Caco-2 (cell line): ENCODE measurements at regions of chr22 and their contacts with region 1.

Region 1: DNA sequence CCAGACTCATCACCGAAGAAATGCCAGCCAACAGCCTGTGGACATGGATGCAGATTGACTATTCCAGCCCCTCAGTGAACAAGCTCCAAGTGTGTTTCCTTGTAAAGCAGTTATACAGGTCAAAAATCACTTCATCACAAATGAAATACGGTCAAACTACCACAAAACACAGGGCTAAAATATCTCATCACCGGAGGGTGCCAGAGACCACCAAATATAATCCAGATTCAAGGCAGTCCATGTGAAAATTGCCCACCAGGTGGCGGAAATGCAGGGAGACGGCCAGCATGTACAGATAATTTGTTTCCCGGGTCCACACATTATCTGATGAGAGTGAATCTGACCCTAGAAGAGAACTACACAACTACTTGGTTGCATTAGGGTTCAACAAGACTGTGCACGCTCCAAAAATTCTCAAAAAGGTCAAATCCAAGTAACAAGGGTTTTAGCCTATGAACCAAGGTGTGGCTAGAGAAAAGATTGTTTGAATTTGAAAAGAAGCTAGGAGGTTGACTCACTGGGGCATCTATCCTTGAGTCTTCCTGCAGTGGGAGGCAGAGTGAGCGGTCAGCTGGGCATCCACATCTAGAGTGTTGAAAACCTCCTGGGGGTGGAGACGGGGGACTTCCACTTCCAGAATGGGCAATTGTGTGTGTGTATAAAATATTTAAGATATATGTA is 71.7 kb downstream of the IGLL5 start:
- DNase-seq: peak; percentile 73 to 82
- H3K4me3 ChIP-seq: no peak overlapping the region
- H3K4me3 Mint-ChIP-seq: no peak overlapping the region
- H3K27ac Mint-ChIP-seq: no peak overlapping the region
- H3K4me1 ChIP-seq: no peaks in the 10 kb centered on the region
- H3K4me1 Mint-ChIP-seq: no peaks in the 10 kb centered on the region
- H3K27me3 ChIP-seq: no peaks in the 10 kb centered on the region; the same call in 1 of the 2 replicates
- H3K27me3 Mint-ChIP-seq: peaks cover 6% of the 10 kb centered on the region
- CTCF ChIP-seq: peak; percentile 86 to 93

Region 2: GRCh38 chr22:22848364-22848866 is 110.9 kb before region 1 on chr22:
- CTCF ChIA-PET with region 1: interaction called, 4 read pairs
- POLR2A ChIA-PET with region 1: no interaction called
- intact Hi-C with region 1: loop called (anchors 1 kb)
- DNase-seq: peak; percentile 74 to 81
- H3K4me3 ChIP-seq: no peak overlapping the region
- H3K4me3 Mint-ChIP-seq: no peak overlapping the region
- H3K27ac Mint-ChIP-seq: no peak overlapping the region
- H3K4me1 ChIP-seq: no peaks in the 10 kb centered on the region
- H3K4me1 Mint-ChIP-seq: no peaks in the 10 kb centered on the region
- H3K27me3 ChIP-seq: no peaks in the 10 kb centered on the region
- H3K27me3 Mint-ChIP-seq: peaks cover under 1% of the 10 kb centered on the region
- CTCF ChIP-seq: peak; percentile 85 to 92

Region 3: GRCh38 chr22:23128269-23129108 is 169.2 kb after region 1 on chr22:
- CTCF ChIA-PET with region 1: interaction called, 42 read pairs
- POLR2A ChIA-PET with region 1: no interaction called
- intact Hi-C with region 1: loop called (anchors 1 kb)
- DNase-seq: peak; percentile 67 to 86
- H3K4me3 ChIP-seq: no peak overlapping the region
- H3K4me3 Mint-ChIP-seq: no peak overlapping the region
- H3K27ac Mint-ChIP-seq: no peak overlapping the region
- H3K4me1 ChIP-seq: no peaks in the 10 kb centered on the region
- H3K4me1 Mint-ChIP-seq: no peaks in the 10 kb centered on the region
- H3K27me3 ChIP-seq: no peaks in the 10 kb centered on the region
- H3K27me3 Mint-ChIP-seq: no peaks in the 10 kb centered on the region
- CTCF ChIP-seq: peak; percentile 64 to 76

Region 4: DNA sequence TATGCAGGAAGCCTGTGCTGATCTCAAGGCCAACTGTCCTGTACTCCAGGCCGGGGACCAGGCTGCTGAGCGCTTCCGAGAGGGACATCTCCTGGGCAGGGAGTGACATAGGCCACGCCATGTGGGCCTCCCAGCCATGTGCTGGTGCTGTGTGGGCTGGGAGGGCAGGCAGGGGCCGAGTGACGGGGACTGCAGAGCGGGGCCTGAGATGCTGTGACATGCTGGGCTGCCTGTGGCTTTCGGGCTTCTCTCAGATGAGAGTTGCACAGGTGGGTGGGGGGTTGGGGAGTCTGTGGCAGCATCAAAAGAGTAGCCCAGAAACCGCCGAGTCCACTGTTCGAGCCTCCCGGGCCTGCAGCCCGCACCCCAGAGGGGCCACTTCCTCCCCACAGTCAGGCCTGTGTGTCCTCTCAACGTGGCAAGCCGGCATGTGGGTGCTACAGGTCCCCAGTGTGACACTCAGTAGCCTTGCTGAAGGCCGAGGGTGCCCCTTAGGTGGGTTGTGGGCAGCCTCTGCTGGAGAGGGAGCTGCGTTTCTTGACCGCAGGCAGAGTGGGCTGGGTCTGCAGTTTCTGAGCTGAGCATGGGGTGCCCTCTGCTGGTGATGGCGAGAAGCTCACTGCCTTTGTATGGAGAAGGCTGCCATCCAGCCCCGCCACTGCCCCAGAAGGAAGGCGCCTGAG is 322.3 kb after region 1 on chr22:
- CTCF ChIA-PET with region 1: interaction called, 7 read pairs
- POLR2A ChIA-PET with region 1: no interaction called
- intact Hi-C with region 1: loop called (anchors 5 kb)
- DNase-seq: peak; percentile 81 to 86
- H3K4me3 ChIP-seq: no peak overlapping the region
- H3K4me3 Mint-ChIP-seq: no peak overlapping the region
- H3K27ac Mint-ChIP-seq: no peak overlapping the region
- H3K4me1 ChIP-seq: no peaks in the 10 kb centered on the region
- H3K4me1 Mint-ChIP-seq: no peaks in the 10 kb centered on the region
- H3K27me3 ChIP-seq: no peaks in the 10 kb centered on the region
- H3K27me3 Mint-ChIP-seq: no peaks in the 10 kb centered on the region
- CTCF ChIP-seq: peak; percentile 92

Region 5: DNA sequence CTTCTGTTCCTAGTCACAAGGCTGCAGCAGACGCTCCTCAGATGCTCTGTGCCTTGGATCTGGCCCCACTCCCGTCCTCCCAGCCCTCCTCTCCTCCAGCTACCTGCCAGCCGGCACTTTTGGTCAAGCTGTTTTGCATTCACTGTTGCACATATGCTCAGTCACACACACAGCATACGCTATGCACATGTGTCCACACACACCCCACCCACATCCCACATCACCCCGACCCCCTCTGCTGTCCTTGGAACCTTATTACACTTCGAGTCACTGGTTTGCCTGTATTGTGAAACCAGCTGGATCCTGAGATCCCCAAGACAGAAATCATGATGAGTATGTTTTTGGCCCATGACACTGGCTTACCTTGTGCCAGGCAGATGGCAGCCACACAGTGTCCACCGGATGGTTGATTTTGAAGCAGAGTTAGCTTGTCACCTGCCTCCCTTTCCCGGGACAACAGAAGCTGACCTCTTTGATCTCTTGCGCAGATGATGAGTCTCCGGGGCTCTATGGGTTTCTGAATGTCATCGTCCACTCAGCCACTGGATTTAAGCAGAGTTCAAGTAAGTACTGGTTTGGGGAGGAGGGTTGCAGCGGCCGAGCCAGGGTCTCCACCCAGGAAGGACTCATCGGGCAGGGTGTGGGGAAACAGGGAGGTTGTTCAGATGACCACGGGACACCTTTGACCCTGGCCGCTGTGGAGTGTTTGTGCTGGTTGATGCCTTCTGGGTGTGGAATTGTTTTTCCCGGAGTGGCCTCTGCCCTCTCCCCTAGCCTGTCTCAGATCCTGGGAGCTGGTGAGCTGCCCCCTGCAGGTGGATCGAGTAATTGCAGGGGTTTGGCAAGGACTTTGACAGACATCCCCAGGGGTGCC is 330.8 kb after region 1 on chr22:
- CTCF ChIA-PET with region 1: no interaction called
- POLR2A ChIA-PET with region 1: no interaction called
- intact Hi-C with region 1: loop called (anchors 1 kb)
- DNase-seq: peak; percentile 66 to 68
- H3K4me3 ChIP-seq: no peak overlapping the region
- H3K4me3 Mint-ChIP-seq: no peak overlapping the region
- H3K27ac Mint-ChIP-seq: peak overlapping the region; percentile 57
- H3K4me1 ChIP-seq: peaks cover 14% of the 10 kb centered on the region
- H3K4me1 Mint-ChIP-seq: peaks cover 18% of the 10 kb centered on the region
- H3K27me3 ChIP-seq: no peaks in the 10 kb centered on the region
- H3K27me3 Mint-ChIP-seq: no peaks in the 10 kb centered on the region
- CTCF ChIP-seq: peak in 1 of 2 experiments; percentile 83